Aorta (tissue), 5 donors: ENCODE measurements at regions of chr1 and their contacts with region 1.

Region 1: GRCh38 chr1:157580179-157580827 is 17.6 kb downstream of the FCRL4 start:
- DNase-seq: no peak
- ATAC-seq: no peak
- H3K4me3 ChIP-seq: no peak overlapping the region
- H3K27ac ChIP-seq: no peak overlapping the region
- H3K4me1 ChIP-seq: no peaks in the 10 kb centered on the region
- H3K27me3 ChIP-seq: peaks cover 0 to 2% of the 10 kb centered on the region in 2 donors

Region 2: GRCh38 chr1:157348538-157349480 is 231.5 kb before region 1 on chr1:
- intact Hi-C with region 1: no loop called
- DNase-seq: no peak
- ATAC-seq: no peak
- H3K4me3 ChIP-seq: no peak overlapping the region
- H3K27ac ChIP-seq: no peak overlapping the region
- H3K4me1 ChIP-seq: no peaks in the 10 kb centered on the region
- H3K27me3 ChIP-seq: peaks cover 0 to 3% of the 10 kb centered on the region in 2 donors

Region 3: GRCh38 chr1:157442065-157442464 is 138.2 kb before region 1 on chr1:
- intact Hi-C with region 1: no loop called
- DNase-seq: no peak
- ATAC-seq: no peak
- H3K4me3 ChIP-seq: no peak overlapping the region
- H3K27ac ChIP-seq: no peak overlapping the region
- H3K4me1 ChIP-seq: no peaks in the 10 kb centered on the region
- H3K27me3 ChIP-seq: no peaks in the 10 kb centered on the region

Region 4: GRCh38 chr1:158124999-158125398 is 544.7 kb after region 1 on chr1:
- intact Hi-C with region 1: loop called (anchors 2 to 5 kb)
- DNase-seq: peak; percentile 86 to 88
- ATAC-seq: peak; percentile 96
- H3K4me3 ChIP-seq: no peak overlapping the region
- H3K27ac ChIP-seq: no peak overlapping the region
- H3K4me1 ChIP-seq: no peaks in the 10 kb centered on the region
- H3K27me3 ChIP-seq: no peaks in the 10 kb centered on the region